K562 (cell line): ENCODE measurements at regions of chr1 and their contacts with region 1.

Region 1: GRCh38 chr1:19811206-19811851 is 3.8 kb downstream of the RNF186 start:
- DNase-seq: peak; percentile 67 to 72 (median 72)
- ATAC-seq: peak; percentile 96
- H3K4me3 ChIP-seq: no peak overlapping the region
- H3K27ac ChIP-seq: no peak overlapping the region
- H3K4me1 ChIP-seq: peaks cover 0 to 2% of the 10 kb centered on the region in 2 experiments; a peak in 2 of 5 replicates
- H3K27me3 ChIP-seq: peaks cover 33 to 55% of the 10 kb centered on the region in 2 experiments; a peak in 4 of 5 replicates
- CTCF ChIP-seq: peak; percentile 76 to 86 (median 79)
- EP300 ChIP-seq: no peak
- POLR2A ChIP-seq: no peak
- RAD21 ChIP-seq: peak; percentile 26 to 73

Region 2: DNA sequence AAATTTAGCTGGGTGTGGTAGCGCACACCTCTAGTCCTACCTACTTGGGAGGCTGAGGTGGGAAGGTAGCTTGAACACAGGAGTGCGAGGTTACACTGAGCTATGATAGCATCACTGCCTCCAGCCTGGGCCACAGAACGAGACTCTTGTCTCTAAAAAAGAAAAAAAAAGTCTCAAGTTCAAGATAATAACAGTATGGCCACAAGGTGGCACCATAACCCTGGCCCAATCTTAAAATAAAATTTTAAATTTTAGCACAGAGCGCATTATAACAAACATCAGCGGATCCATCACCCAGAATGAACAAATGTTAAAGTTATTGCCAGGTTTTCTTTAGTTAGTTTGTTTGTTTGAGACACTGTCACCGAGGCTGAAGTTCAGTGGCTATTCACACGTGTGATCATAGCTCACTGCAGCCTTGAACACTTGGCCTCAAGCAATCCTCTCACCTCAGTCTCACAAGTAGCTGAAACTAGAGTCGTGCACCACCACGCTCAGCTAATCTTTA is 149.6 kb before region 1 on chr1:
- CTCF ChIA-PET with region 1: no interaction called
- POLR2A ChIA-PET with region 1: no interaction called
- in situ Hi-C with region 1: no loop called
- intact Hi-C with region 1: loop called (anchors 5 kb)
- DNase-seq: peak in 2 of 4 experiments; percentile 28 to 65
- ATAC-seq: no peak
- H3K4me3 ChIP-seq: no peak overlapping the region
- H3K27ac ChIP-seq: no peak overlapping the region
- H3K4me1 ChIP-seq: peaks cover 0 to 25% of the 10 kb centered on the region in 2 experiments; a peak in 2 of 5 replicates
- H3K27me3 ChIP-seq: peaks cover 27 to 62% of the 10 kb centered on the region in 2 experiments; a peak in 4 of 5 replicates
- CTCF ChIP-seq: peak; percentile 63 to 89 (median 78)
- EP300 ChIP-seq: no peak
- POLR2A ChIP-seq: no peak
- RAD21 ChIP-seq: peak; percentile 53 to 75

Region 3: DNA sequence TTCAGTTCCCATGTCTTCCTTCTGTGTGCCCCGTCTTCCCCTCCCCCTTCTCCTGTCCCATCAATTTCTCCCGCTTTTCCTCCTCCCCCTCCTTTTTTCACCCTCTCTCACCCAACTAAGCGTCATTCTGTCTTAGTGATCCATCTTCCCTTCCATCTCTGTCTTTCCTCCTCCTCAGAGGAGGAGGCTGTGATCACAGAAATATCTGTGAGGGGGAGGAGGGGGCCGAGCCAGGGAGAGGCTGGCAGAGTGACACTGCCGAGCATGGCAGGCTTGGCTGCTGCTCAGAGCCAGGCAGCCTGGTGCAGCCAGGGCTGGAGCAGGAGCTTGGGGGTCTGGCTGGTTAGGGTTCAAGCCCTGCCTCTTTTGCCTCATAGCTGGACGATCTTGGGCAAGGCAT is 139.1 kb before region 1 on chr1:
- CTCF ChIA-PET with region 1: no interaction called
- POLR2A ChIA-PET with region 1: no interaction called
- in situ Hi-C with region 1: no loop called
- intact Hi-C with region 1: no loop called
- DNase-seq: no peak
- ATAC-seq: no peak
- H3K4me3 ChIP-seq: no peak overlapping the region
- H3K27ac ChIP-seq: no peak overlapping the region
- H3K4me1 ChIP-seq: no peaks in the 10 kb centered on the region
- H3K27me3 ChIP-seq: peaks cover 14 to 45% of the 10 kb centered on the region in 2 experiments; a peak in 4 of 5 replicates
- CTCF ChIP-seq: no peak
- EP300 ChIP-seq: no peak
- POLR2A ChIP-seq: no peak
- RAD21 ChIP-seq: no peak

Region 4: DNA sequence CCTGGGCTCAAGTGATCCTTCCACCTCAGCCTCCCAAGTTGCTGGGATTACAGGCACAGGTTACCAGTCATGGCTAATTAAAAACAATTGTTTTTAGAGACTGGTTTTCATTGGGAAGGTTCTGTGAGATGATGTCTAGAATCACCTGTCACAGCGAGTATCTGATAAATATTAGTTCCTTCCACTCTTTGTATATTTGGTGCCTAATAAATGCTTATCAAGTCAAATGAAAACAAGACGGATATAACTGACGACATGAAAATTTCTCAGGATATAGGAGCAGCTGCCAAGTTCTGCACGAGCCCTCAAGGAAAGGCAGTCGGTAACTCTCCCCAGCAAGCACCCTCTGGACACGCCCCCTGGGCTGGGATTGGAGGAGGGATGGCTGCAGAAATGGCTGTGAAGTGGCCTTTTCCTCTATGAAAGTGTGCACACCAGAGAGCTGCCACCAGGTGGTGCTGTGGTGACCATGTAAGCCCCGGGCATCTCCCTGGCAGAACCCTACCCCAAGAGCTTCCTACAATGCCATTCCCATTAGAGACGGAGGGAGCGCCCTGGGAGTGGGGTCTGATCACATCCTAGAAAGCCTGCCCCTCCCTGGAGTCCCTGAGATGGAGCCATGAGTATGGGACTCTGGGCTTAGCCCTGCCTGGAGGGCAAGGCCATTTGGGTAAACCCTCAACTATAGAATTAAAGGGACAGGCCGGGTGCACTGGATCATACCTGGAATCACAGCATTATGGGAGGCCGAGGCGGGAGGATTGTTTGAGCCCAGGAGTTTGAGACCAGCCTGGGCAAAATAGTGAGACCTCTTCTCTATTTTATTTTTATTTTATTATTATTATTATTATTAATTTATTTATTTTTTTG is 95.8 kb before region 1 on chr1:
- CTCF ChIA-PET with region 1: interaction called, 4 read pairs
- POLR2A ChIA-PET with region 1: interaction called, 3 read pairs
- in situ Hi-C with region 1: no loop called
- intact Hi-C with region 1: loop called (anchors 1 kb)
- DNase-seq: peak; percentile 91 to 93 (median 92)
- ATAC-seq: peak; percentile 100
- H3K4me3 ChIP-seq: no peak overlapping the region
- H3K27ac ChIP-seq: no peak overlapping the region
- H3K4me1 ChIP-seq: no peaks in the 10 kb centered on the region
- H3K27me3 ChIP-seq: peaks cover 12 to 22% of the 10 kb centered on the region in 2 experiments; a peak in 3 of 5 replicates
- CTCF ChIP-seq: peak; percentile 82 to 97 (median 92)
- EP300 ChIP-seq: no peak
- POLR2A ChIP-seq: no peak
- RAD21 ChIP-seq: peak; percentile 38 to 75

Region 5: DNA sequence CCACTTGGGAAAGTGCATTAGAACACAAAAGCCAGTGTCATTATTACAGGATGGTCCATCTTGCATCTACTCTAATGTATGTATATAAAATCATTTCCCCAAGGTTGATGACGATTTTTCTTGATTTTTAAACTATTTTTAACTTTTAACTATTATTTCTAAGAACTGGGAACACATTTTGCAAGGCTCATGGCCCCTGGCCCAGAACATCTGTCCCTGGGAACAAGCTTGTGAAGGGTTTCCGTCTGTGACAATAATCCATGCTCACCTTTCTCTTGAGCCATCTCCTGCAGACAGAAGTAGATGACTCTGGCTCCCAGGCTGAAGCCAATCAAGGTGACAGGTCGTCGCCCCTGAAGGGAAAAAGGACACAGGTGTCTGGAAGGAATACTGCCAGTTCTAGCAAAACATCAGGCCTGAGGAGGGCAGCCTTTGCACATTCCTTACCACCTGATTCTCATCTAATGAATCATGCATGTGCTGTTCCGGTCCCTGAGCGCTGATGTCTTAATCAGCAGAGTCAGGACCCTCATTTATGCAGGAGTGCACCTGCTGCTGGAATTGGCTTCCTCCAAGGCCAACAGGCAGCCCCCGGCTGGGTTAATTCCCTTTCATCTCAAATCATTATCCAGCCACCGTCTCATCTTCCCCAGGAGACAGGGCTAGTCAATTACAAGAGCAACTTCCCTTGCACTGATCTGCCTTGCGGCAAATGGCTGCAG is 74.1 kb before region 1 on chr1:
- CTCF ChIA-PET with region 1: no interaction called
- POLR2A ChIA-PET with region 1: no interaction called
- in situ Hi-C with region 1: no loop called
- intact Hi-C with region 1: loop called (anchors 1 kb)
- DNase-seq: no peak
- ATAC-seq: no peak
- H3K4me3 ChIP-seq: no peak overlapping the region
- H3K27ac ChIP-seq: no peak overlapping the region
- H3K4me1 ChIP-seq: no peaks in the 10 kb centered on the region; a peak in 1 of 5 replicates
- H3K27me3 ChIP-seq: peaks cover 17 to 66% of the 10 kb centered on the region in 2 experiments
- CTCF ChIP-seq: no peak
- EP300 ChIP-seq: no peak
- POLR2A ChIP-seq: no peak
- RAD21 ChIP-seq: peak in 1 of 2 experiments; percentile 25; a peak in 2 of 4 replicates

Region 6: DNA sequence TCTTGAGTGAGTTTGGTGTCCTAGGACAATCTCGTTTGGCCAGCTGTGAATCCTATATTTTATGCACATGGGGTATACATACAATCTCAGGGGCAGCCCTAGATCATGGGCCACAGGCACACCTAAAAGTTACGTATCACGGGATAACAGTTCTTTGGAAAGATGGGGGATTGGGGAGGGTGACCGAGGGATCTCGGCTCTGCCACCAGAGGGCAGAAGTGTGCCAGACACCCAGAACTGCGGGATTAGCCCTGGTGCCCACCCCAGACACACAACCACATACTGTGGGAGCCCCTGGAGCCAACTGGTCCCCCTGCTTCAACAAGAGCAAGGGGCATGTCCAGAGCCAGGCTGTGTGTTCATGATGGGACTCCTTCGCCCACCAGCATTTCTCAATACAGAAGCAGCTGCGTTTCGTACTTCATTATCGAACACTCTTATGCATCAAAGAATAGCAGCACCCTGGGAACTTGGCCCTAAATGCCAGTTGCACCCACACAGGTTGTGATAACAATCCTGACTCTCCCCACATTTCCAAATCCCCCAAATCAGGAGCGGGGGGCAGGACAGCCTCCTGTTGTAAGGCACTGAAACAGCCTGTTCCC is 49.1 kb before region 1 on chr1:
- CTCF ChIA-PET with region 1: interaction called, 10 read pairs
- POLR2A ChIA-PET with region 1: no interaction called
- in situ Hi-C with region 1: no loop called
- intact Hi-C with region 1: loop called (anchors 1 kb)
- DNase-seq: peak; percentile 50 to 87 (median 82)
- ATAC-seq: peak; percentile 92
- H3K4me3 ChIP-seq: no peak overlapping the region
- H3K27ac ChIP-seq: no peak overlapping the region
- H3K4me1 ChIP-seq: no peaks in the 10 kb centered on the region
- H3K27me3 ChIP-seq: peaks cover 37 to 85% of the 10 kb centered on the region in 2 experiments
- CTCF ChIP-seq: peak; percentile 75 to 87 (median 77)
- EP300 ChIP-seq: no peak
- POLR2A ChIP-seq: no peak
- RAD21 ChIP-seq: peak; percentile 41 to 77

Region 7: GRCh38 chr1:19828546-19828945 is 17.2 kb after region 1 on chr1:
- CTCF ChIA-PET with region 1: no interaction called
- POLR2A ChIA-PET with region 1: no interaction called
- in situ Hi-C with region 1: no loop called
- intact Hi-C with region 1: no loop called
- DNase-seq: no peak
- ATAC-seq: no peak
- H3K4me3 ChIP-seq: no peak overlapping the region
- H3K27ac ChIP-seq: no peak overlapping the region
- H3K4me1 ChIP-seq: no peaks in the 10 kb centered on the region
- H3K27me3 ChIP-seq: peaks cover 20 to 29% of the 10 kb centered on the region in 2 experiments
- CTCF ChIP-seq: no peak
- EP300 ChIP-seq: no peak
- POLR2A ChIP-seq: no peak
- RAD21 ChIP-seq: no peak